ENCODE measurements at regions of chr4 and their contacts with region 1.

Region 1: DNA sequence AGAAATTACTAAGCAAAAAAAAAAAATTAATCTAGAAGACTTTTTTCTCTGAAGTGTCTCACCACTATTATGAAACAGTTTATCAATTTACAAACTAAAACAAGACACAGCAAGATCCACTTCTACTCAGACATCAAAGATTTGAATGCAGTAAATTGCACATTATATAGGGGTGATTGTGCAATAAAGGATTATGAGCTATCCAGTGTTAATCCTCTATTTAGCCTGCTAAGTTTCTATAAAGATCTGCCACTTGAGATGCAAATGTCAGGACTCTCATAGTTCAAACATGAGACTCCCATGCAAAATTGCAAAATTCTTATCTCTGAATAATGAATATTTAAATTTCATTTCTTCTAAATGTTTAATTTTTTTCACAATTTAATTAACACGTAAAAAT is 2.2 kb downstream of the TECRL start:
- DNase-seq: no peak
- ATAC-seq: no peak
- H3K4me3 ChIP-seq: peak overlapping the region; percentile 3 to 53 (median 48)
- H3K27ac ChIP-seq: peak overlapping the region in 9 of 10 donors; percentile 26 to 79 (median 76)
- H3K4me1 ChIP-seq: no peaks in the 10 kb centered on the region
- H3K27me3 ChIP-seq: no peaks in the 10 kb centered on the region
- CTCF ChIP-seq: no peak

Region 2: DNA sequence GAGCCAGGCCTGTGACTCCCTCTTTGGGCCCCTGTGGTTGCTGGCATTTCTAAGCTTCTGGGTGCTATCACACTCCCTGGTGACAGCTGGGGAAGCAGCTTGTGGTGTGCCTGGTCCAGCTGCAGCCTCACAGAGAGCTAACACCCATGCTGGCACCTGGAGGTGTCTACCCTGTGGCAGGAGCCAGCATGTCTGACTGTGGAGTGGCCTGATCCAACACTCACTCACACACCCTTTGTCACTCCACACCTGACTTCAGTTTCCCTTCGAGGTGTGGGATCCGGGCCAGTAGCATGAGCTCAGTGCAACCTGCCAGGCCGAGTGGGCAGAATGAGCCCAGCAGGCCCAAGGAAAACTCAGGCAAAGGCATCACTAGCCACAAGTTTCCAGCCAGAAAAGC is 65.3 kb before region 1 on chr4:
- intact Hi-C with region 1: loop called in 1 of 10 experiments (anchors 10 kb)
- DNase-seq: peak; percentile 69 to 80
- ATAC-seq: peak; percentile 85 to 98 (median 94)
- H3K4me3 ChIP-seq: no peak overlapping the region
- H3K27ac ChIP-seq: peak overlapping the region in 7 of 10 donors; percentile 11 to 82 (median 60)
- H3K4me1 ChIP-seq: peaks cover 0 to 49% (median 17%) of the 10 kb centered on the region in 9 donors
- H3K27me3 ChIP-seq: no peaks in the 10 kb centered on the region
- CTCF ChIP-seq: peak in 1 of 9 donors; percentile 6

Region 3: GRCh38 chr4:64489628-64490027 is 82.6 kb after region 1 on chr4:
- intact Hi-C with region 1: loop called in 2 of 10 experiments (anchors 5 to 10 kb)
- DNase-seq: no peak
- ATAC-seq: peak in 2 of 8 donors; percentile 56
- H3K4me3 ChIP-seq: no peak overlapping the region
- H3K27ac ChIP-seq: peak overlapping the region in 4 of 10 donors; percentile 11 to 56 (median 30)
- H3K4me1 ChIP-seq: peaks cover 0 to 5% (median 0%) of the 10 kb centered on the region in 9 donors
- H3K27me3 ChIP-seq: no peaks in the 10 kb centered on the region
- CTCF ChIP-seq: no peak